MCF 10A (cell line): ENCODE measurements at regions of chr9 and their contacts with region 1.

Region 1: DNA sequence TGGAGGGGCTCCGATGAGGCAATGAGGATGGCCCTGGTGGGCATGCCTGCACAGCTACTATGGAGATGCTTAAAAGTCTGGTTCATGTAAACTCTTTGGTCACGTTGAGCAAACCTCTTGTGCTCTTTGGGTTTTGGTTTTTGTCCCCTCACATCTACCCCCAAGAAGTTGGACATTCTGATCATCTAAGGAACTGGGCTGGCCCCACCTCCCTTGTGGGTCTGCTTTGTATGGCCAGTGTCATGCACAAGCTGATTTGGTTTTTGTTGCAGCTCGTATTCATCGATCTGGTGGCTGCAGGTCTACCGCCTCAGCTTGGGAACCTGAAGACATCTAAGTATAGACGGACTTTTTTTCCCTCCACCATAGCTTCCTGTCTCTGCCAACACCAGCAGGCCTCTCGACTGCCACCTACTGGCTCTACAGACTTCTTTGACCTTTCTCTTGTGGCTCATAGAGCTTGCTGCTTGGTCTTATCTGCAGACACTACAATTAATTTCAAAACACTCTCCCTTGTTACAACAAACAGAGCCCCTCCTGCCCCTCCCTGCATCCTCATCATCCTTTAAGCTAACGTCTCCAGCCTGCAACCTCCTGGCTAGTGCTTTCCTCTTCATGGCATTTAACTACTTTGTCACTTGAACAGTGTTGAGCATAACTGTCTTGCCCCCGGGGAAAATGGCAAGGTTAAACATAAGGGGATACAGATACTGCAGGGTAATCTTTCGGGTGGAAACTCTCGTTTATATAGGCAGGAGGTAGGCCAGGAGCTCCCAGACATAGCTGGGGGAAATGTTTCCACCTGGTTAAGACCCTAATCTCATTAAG is 34.5 kb downstream of the TSTD2 start:
- DNase-seq: peak; percentile 80
- H3K4me3 Mint-ChIP-seq: no peak overlapping the region
- H3K27ac Mint-ChIP-seq: no peak overlapping the region
- H3K4me1 Mint-ChIP-seq: peaks cover 9% of the 10 kb centered on the region
- H3K27me3 Mint-ChIP-seq: no peaks in the 10 kb centered on the region
- CTCF ChIP-seq: peak; percentile 77

Region 2: DNA sequence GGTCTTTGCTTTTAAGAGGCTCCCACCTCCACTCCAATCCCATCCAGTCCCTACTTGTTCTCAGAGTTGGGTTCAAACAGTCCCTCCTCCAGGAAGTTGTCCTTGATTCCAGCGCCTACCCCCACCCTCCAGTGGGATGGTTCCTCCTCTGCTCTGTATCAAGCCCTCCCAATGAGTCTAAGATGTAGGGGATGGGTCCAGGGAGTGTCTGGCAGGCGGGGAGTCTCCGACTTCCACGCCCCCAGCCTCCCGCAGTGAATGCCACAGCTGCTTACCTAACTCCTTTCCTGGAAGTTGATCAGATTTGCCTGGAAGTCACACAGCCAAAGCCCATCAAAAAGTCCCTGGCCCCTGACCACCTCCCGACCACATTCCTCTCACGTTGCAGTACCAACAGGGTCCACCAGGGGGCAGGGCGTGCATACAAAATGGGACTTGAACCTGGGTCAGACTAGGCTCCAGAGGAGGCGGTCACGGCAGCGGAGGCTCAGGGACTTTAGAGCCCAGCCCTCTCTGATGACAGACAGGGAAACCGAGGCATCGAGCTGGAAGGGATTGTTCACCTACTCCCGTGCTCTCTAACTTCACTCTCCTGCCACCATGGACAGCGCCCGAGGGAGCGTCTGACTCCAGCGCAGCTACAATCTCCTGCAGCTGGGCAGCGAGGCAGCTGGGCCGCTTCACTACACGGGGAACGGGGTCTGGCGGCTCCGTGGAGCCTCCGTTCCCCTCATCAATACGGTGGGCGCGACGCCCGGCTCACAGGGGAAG is 211.8 kb before region 1 on chr9:
- CTCF ChIA-PET with region 1: interaction called, 7 read pairs
- POLR2A ChIA-PET with region 1: no interaction called
- intact Hi-C with region 1: loop called (anchors 1 kb)
- DNase-seq: peak; percentile 73
- H3K4me3 Mint-ChIP-seq: no peak overlapping the region
- H3K27ac Mint-ChIP-seq: no peak overlapping the region
- H3K4me1 Mint-ChIP-seq: no peaks in the 10 kb centered on the region
- H3K27me3 Mint-ChIP-seq: no peaks in the 10 kb centered on the region
- CTCF ChIP-seq: peak; percentile 98

Region 3: DNA sequence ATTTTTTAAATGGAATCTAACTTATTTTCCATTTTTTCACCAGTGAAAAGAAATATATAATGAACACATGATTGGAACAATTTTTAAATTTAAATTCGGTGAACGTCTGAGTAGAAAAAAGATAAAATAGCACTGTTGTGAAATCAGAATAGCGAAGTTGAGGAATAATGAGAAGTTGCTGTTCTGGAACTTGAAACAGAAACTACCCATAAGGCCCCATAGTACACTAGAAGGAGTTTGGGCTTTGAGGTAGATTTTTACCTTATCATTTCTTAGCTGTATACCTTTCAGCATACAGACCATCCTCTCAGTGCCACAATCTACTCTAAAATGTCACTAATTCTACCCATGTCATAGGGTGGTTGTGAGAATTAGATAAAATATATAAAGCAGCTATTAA is 151.7 kb before region 1 on chr9:
- CTCF ChIA-PET with region 1: interaction called, 16 read pairs
- POLR2A ChIA-PET with region 1: no interaction called
- intact Hi-C with region 1: no loop called
- DNase-seq: no peak
- H3K4me3 Mint-ChIP-seq: no peak overlapping the region
- H3K27ac Mint-ChIP-seq: no peak overlapping the region
- H3K4me1 Mint-ChIP-seq: peaks cover under 1% of the 10 kb centered on the region
- H3K27me3 Mint-ChIP-seq: no peaks in the 10 kb centered on the region
- CTCF ChIP-seq: no peak

Region 4: DNA sequence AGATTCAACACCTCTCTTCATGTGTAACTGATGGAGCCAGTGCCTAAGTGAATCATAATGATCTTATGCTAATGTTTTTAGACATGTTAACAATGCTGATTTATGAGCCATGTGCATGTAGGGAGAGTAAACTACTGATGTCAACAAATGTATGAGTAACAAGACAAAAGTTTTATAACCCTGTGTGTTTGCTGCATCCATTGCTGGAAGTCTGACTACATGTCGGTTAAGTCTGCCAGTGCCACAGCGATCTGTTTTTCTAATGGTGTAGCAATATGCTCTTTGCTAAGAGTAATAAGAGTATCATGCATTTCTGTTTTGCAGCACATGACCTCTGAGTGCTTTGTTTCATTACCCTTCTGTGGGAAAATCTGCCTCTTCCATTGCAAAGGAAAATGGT is 123.6 kb before region 1 on chr9:
- CTCF ChIA-PET with region 1: interaction called, 345 read pairs
- POLR2A ChIA-PET with region 1: interaction called, 34 read pairs
- intact Hi-C with region 1: no loop called
- DNase-seq: no peak
- H3K4me3 Mint-ChIP-seq: no peak overlapping the region
- H3K27ac Mint-ChIP-seq: no peak overlapping the region
- H3K4me1 Mint-ChIP-seq: no peaks in the 10 kb centered on the region
- H3K27me3 Mint-ChIP-seq: no peaks in the 10 kb centered on the region
- CTCF ChIP-seq: no peak

Region 5: DNA sequence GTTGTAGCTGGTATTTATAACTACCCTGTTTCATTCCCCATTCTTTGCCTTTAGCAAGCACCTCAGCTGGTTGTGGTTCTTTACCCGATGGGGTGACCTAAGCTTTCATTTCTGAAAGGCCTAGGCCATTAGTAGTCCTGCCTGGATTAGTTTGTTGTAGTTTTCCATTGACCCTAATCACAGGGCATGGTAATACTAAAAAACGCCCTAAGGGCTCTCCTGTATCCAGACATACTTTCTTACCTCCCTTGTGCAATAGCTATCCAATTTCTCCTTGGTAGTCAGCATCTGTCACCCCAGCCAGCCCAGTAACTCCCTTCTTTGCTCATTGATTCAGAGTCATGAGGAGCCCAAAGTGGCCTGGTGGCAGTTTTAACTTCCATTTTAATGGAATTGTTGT is 73.2 kb before region 1 on chr9:
- CTCF ChIA-PET with region 1: interaction called, 17 read pairs
- POLR2A ChIA-PET with region 1: no interaction called
- intact Hi-C with region 1: no loop called
- DNase-seq: peak; percentile 84
- H3K4me3 Mint-ChIP-seq: no peak overlapping the region
- H3K27ac Mint-ChIP-seq: peak overlapping the region; percentile 3
- H3K4me1 Mint-ChIP-seq: peaks cover 28% of the 10 kb centered on the region
- H3K27me3 Mint-ChIP-seq: no peaks in the 10 kb centered on the region
- CTCF ChIP-seq: no peak

Region 6: GRCh38 chr9:97615439-97616072 is 16.9 kb after region 1 on chr9:
- CTCF ChIA-PET with region 1: interaction called, 189 read pairs
- POLR2A ChIA-PET with region 1: interaction called, 4 read pairs
- intact Hi-C with region 1: no loop called
- DNase-seq: peak; percentile 71
- H3K4me3 Mint-ChIP-seq: no peak overlapping the region
- H3K27ac Mint-ChIP-seq: no peak overlapping the region
- H3K4me1 Mint-ChIP-seq: peaks cover 7% of the 10 kb centered on the region
- H3K27me3 Mint-ChIP-seq: no peaks in the 10 kb centered on the region
- CTCF ChIP-seq: peak; percentile 54

Region 7: DNA sequence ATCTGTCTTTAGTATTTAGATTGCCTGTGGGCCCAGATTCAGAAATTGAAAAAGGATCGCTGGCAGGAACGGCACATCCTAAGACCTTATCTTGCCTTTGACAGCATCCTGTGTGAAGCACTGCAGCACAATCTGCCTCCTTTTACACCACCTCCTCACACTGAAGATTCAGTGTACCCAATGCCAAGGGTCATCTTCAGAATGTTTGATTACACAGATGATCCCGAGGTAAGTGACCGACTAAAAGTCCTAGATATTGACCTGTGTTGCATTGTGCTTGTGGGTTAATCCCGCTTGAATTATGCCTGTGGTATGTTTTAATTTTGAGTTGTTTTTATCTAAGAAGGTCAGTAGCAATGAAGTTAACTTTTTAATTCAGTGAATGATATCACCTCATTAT is 49.3 kb after region 1 on chr9:
- CTCF ChIA-PET with region 1: no interaction called
- POLR2A ChIA-PET with region 1: no interaction called
- intact Hi-C with region 1: no loop called
- DNase-seq: no peak
- H3K4me3 Mint-ChIP-seq: no peak overlapping the region
- H3K27ac Mint-ChIP-seq: no peak overlapping the region
- H3K4me1 Mint-ChIP-seq: peaks cover 6% of the 10 kb centered on the region
- H3K27me3 Mint-ChIP-seq: no peaks in the 10 kb centered on the region
- CTCF ChIP-seq: no peak